ENCODE measurements at regions of chr4 and their contacts with region 1.

Region 1: GRCh38 chr4:184538023-184538599 is 63.8 kb upstream of the IRF2 start:
- DNase-seq: peak; percentile 75
- ATAC-seq: peak; percentile 59
- H3K4me3 Mint-ChIP-seq: peak overlapping the region; percentile 99
- H3K27ac Mint-ChIP-seq: peak overlapping the region; percentile 97
- H3K4me1 Mint-ChIP-seq: peaks cover 33% of the 10 kb centered on the region
- H3K27me3 Mint-ChIP-seq: no peaks in the 10 kb centered on the region
- CTCF ChIP-seq: peak; percentile 54

Region 2: DNA sequence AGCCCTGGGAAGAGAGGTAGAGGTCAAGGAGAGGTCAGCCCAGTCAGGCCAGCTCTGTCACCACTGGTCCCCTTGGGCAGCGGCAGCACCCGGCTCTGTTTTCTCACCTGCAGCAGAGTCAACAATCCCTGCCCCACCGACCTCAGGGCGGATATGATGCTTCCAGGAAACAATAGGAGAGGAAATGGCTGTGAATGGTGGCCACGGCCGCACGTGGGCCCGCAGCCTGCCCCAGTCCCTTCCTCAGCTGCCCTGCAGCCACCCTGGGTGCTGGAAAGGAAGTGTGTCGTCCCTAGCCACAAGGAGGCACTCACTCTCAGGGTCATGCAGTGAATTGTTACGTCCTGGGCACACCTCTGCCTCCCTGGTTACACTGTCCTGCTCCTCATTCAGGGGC is 227.9 kb before region 1 on chr4:
- CTCF ChIA-PET with region 1: no interaction called
- POLR2A ChIA-PET with region 1: no interaction called
- intact Hi-C with region 1: loop called (anchors 5 kb)
- DNase-seq: peak; percentile 72
- ATAC-seq: peak; percentile 51
- H3K4me3 Mint-ChIP-seq: peak overlapping the region; percentile 18
- H3K27ac Mint-ChIP-seq: peak overlapping the region; percentile 88
- H3K4me1 Mint-ChIP-seq: peaks cover 68% of the 10 kb centered on the region
- H3K27me3 Mint-ChIP-seq: no peaks in the 10 kb centered on the region
- CTCF ChIP-seq: peak; percentile 60

Region 3: DNA sequence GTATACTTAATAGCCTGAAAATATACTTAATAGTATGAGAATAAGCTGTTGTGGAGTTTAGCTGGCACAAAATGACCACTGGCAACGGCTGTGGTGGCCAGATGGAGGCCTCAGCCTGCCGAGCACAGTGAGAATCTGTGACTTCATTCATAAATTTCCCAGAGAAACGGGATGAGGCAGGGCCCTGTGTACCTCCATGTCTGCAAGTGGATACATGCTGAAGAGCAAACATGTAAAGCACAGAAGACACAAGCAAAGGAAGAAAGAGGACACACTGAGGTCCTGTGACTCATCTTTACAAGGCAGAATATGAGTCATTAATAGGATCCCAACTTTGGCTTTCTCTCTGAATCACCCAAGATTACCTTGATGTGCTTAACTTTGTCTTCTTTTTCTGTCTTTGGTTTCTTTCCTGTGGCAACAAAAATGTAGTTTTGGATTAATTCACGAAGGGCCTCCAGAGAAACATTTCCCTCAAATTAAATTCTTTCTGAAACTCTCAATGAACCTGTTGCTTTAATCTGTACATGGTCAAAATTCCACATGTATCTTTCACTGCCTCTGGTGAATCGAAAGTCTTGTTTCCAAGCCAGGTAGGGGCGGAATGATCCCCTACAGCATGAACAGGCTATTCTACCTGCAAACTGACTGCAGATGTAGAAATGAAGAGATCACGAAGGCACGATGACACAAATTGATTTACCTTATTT is 120.2 kb before region 1 on chr4:
- CTCF ChIA-PET with region 1: interaction called, 5 read pairs
- POLR2A ChIA-PET with region 1: no interaction called
- intact Hi-C with region 1: loop called (anchors 2 kb)
- DNase-seq: peak; percentile 22
- ATAC-seq: peak; percentile 76
- H3K4me3 Mint-ChIP-seq: peak overlapping the region; percentile 70
- H3K27ac Mint-ChIP-seq: peak overlapping the region; percentile 93
- H3K4me1 Mint-ChIP-seq: peaks cover 81% of the 10 kb centered on the region
- H3K27me3 Mint-ChIP-seq: no peaks in the 10 kb centered on the region
- CTCF ChIP-seq: no peak

Region 4: GRCh38 chr4:184474263-184475095 is 63.6 kb before region 1 on chr4 and contains the start of gene IRF2:
- CTCF ChIA-PET with region 1: interaction called, 7 read pairs
- POLR2A ChIA-PET with region 1: interaction called, 40 read pairs
- intact Hi-C with region 1: loop called (anchors 2 kb)
- DNase-seq: peak; percentile 98
- ATAC-seq: peak; percentile 83
- H3K4me3 Mint-ChIP-seq: peak within 1 kb of the TSS; percentile 94
- H3K27ac Mint-ChIP-seq: peak within 1 kb of the TSS; percentile 98
- H3K4me1 Mint-ChIP-seq: peaks cover 50% of the 10 kb centered on the region
- H3K27me3 Mint-ChIP-seq: no peaks in the 10 kb centered on the region
- CTCF ChIP-seq: no peak
- total RNA-seq, gene IRF2: 48.1 to 56.4 TPM

Region 5: GRCh38 chr4:184514121-184514988 is 23.8 kb before region 1 on chr4:
- CTCF ChIA-PET with region 1: interaction called, 12 read pairs
- POLR2A ChIA-PET with region 1: interaction called, 7 read pairs
- intact Hi-C with region 1: loop called (anchors 2 kb)
- DNase-seq: peak; percentile 88
- ATAC-seq: peak; percentile 93
- H3K4me3 Mint-ChIP-seq: peak overlapping the region; percentile 61
- H3K27ac Mint-ChIP-seq: peak overlapping the region; percentile 81
- H3K4me1 Mint-ChIP-seq: peaks cover 37% of the 10 kb centered on the region
- H3K27me3 Mint-ChIP-seq: no peaks in the 10 kb centered on the region
- CTCF ChIP-seq: no peak

Region 6: DNA sequence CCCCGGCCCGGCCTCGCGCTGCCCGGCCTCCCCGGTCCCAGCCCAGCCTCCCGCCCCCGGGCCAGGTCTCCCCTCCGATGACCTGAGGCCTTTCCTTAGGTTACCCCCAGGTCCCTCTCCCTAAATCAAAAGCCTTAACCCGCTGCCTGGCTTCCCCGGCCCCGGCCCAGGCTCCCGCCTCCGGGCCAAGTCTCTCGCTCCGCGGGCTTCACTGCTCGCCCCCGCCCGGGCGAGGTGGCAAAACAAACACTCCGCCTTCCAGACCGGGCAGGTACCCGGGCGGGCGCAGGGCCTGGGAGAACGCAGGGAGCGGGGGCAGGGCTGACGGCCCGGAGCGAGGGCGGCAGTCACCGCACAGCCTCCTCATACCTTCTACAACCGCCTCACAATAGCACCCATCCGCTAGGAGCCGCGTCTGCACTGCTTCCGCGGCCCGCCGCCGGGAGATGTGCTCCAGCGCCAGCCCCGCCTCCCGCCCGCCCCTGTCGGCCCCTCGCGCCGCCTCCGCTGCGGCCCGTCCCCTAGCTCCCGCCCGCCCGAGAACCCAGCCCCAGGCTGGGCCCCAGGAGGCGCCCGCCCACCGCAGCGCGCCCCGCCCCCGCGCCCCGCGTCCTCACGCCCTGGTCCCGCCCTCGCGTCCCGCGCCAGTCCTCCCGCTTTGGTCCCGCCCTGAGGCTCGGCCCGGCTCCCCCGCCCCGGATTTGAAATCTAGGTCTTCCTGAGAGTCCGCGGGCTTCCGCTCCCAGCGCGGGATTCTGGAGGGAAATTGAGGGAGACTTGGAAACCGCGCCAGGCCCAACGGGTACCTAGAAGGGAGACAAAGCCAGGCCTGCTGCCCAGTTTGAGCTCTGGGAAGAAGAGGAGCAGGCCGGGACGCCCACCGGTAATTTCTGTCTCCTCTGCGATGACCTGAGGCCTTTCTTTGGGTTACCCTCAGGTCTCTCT is 111.2 kb after region 1 on chr4 and contains the starts of genes CASP3 and PRIMPOL:
- CTCF ChIA-PET with region 1: interaction called, 3 read pairs
- POLR2A ChIA-PET with region 1: no interaction called
- intact Hi-C with region 1: loop called (anchors 5 kb)
- DNase-seq: peak; percentile 95
- ATAC-seq: peak; percentile 83
- H3K4me3 Mint-ChIP-seq: peak within 1 kb of the TSS; percentile 94
- H3K27ac Mint-ChIP-seq: peak within 1 kb of the TSS; percentile 92
- H3K4me1 Mint-ChIP-seq: peaks cover 46% of the 10 kb centered on the region
- H3K27me3 Mint-ChIP-seq: no peaks in the 10 kb centered on the region
- CTCF ChIP-seq: no peak
- total RNA-seq, gene CASP3: 96.9 to 100 TPM
- total RNA-seq, gene PRIMPOL: 16.9 to 17.3 TPM

Region 7: GRCh38 chr4:184762100-184762499 is 224.0 kb after region 1 on chr4:
- CTCF ChIA-PET with region 1: no interaction called
- POLR2A ChIA-PET with region 1: no interaction called
- intact Hi-C with region 1: no loop called
- DNase-seq: peak; percentile 53
- ATAC-seq: peak; percentile 99
- H3K4me3 Mint-ChIP-seq: peak overlapping the region; percentile 50
- H3K27ac Mint-ChIP-seq: peak overlapping the region; percentile 88
- H3K4me1 Mint-ChIP-seq: peaks cover 20% of the 10 kb centered on the region
- H3K27me3 Mint-ChIP-seq: no peaks in the 10 kb centered on the region
- CTCF ChIP-seq: no peak

Measured in activated CD8-positive, alpha-beta T cell treated with anti-CD3 and anti-CD28 coated beads for 36 hours (primary cell).